Activated T-helper 1 cell treated with anti-CD3 and anti-CD28 coated beads, Interleukin-12 subunit alpha, Interleukin-12 subunit beta, Interleukin-2, Interleukin-4 antibody, amounts not matched to agents 30 ng/mL and 10 ng/mL and 1 ng/mL, durations not matched to agents 14 hours and 24 hours and 36 hours (primary cell): ENCODE measurements at regions of chr1 and their contacts with region 1.

Region 1: DNA sequence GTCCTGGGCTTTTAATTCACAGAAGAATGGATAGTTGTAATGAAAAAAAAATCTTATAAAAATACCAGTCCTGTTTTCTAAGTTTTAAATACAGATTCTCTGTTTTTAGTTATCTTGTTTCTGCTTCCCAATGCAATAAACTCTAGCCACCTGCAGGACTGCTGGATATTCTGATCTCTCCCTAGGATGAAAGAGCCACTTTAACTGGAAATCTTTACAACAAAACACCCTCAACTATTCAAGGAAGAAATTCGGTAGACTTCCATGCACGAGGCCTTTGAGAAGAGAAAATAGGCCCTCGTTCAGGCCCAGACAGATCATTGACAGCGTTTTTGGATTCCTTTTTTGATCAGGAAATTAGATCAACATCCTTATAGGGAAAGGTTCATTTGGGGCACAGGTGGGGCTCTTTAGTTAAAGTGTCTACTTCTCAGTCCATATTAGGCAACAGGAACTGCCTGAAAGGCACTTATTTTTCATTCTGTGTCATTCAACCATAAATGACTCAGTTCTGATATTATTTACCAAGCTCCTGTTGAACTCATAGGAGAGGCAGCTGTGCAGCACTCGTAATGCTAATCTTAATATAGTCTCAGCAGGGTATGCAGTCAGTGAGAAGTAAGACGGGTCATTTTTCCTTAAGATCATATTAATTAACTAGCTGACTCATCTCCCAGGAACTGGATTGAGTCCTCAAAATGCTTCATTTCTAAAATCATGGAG is 71.1 kb upstream of the ERRFI1 start:
- DNase-seq: peak; percentile 11
- H3K4me3 Mint-ChIP-seq: peak overlapping the region; percentile 63
- H3K27ac Mint-ChIP-seq: peak overlapping the region; percentile 69
- H3K4me1 Mint-ChIP-seq: peaks cover 37% of the 10 kb centered on the region
- H3K27me3 Mint-ChIP-seq: peaks cover 5% of the 10 kb centered on the region

Region 2: DNA sequence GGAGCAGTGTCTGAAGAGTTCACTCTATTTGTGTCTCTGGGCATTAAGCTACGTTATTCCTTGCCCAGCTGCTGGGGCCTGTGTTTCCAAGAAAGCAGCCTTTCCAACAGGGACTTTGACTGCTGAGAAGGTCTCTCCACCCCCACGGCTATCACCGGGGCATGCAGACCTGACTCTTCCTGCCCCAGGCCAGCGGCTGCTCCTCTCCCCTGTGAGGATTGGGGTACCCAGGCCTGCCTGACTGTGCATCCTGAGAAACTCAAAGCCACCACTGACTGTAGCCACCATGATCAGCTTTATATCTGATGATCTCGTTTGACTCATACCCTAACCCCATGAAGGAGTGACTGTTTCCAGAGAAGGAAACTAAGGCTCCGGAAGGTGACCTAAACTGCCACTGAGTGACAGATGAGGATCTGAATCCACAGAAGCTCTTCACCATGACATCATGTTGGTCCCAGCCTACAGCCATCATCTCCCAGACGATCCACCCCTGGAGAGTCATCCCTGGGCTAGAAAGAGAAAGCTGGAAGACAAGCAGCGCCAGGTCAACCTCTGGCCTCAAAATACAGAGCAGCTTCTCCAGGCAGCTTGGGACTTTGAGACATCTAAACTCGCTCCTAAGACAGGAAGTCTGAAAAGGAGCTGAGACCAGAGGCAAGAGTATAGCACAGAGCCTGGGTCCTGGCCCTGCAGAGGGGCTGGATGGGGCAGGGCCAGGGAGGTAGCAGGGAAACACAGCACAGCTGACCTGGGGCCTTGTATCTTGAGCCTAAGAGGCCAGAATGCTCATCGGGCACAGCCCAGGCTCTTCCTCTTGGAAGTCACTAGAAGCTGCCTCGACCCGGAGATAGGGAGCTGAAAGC is 570.1 kb before region 1 on chr1:
- intact Hi-C with region 1: no loop called
- DNase-seq: no peak
- H3K4me3 Mint-ChIP-seq: no peak overlapping the region
- H3K27ac Mint-ChIP-seq: no peak overlapping the region
- H3K4me1 Mint-ChIP-seq: no peaks in the 10 kb centered on the region
- H3K27me3 Mint-ChIP-seq: no peaks in the 10 kb centered on the region

Region 3: DNA sequence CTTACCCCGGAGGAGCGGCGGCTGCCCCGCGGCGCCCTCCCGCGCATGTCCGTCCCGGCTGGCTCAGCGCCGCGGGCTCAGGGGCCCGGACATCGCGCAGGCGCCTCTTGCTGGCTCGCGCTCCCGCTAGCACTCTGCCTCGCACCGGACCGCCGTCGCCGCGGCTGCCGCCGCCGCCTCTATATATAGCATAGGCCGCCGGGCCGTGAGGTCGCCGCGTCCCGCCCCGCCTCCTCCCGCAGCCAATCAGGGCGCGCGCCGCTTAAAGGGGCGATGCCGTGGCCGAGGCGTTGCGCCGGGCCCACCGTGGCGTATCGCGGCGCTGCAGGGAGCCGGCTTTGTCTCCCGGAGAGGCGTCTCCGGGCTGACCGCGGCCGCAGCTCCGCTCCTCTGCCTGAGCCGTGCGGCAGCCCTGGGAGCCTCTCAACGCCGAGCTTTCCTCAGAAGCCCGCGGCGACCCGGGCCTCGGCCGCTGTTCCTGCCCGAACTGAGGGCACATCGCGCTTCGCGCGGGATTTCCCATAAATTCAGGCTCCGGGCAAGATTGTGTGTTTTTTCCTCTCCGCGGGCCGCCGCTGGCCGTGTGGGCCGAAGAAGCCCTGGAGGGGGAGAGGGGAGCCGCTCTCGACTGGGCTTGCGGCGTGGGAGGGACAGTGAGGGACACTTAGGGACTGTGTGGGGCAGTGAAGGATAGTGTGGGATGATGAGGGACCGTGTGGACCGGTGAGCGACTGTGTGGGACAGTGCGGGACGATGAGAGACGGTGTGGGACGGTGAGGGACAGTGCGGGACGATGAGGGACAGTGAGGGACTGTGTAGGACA is 70.9 kb before region 1 on chr1 and contains the start of gene ERRFI1:
- intact Hi-C with region 1: loop called (anchors 1 kb)
- DNase-seq: peak; percentile 83
- H3K4me3 Mint-ChIP-seq: peak within 1 kb of the TSS; percentile 84
- H3K27ac Mint-ChIP-seq: peak within 1 kb of the TSS; percentile 32
- H3K4me1 Mint-ChIP-seq: peaks cover 12% of the 10 kb centered on the region
- H3K27me3 Mint-ChIP-seq: peaks cover 52% of the 10 kb centered on the region
- total RNA-seq, gene ERRFI1: 1.6 and 3.2 TPM in 2 replicates

Region 4: DNA sequence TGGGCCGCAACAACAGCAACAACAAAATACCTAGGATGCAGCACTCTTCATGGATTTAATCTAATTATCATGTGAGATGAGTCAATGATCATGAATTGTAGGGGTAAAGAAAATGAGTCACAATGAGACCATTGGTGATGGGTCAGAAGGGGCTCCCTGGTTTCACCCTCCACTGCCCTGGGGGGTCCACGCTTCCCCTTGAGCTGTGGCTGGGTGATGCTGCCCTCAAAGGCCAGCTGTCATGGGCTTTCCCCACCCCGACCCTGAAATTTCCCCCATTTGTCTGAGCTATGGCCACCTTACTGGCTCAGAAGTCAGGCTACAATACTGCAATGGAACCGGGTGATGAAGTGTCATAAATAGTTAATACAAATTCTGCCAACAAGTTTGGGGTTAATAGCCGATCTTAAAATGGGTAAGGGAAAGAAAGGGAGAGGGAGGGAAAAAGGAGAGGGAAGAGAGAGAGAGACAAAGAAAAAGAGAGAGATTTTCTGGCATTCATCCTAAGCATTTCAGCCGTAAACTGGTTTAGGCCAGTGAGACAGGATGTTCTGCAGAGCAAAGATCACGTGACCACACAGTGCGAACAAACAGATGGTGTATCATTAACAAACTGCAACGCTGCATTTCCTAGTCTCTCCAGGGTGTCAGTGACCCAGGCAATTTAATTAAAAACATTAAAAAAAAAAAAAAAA is 72.3 kb after region 1 on chr1:
- intact Hi-C with region 1: loop called (anchors 1 kb)
- DNase-seq: peak; percentile 38
- H3K4me3 Mint-ChIP-seq: peak overlapping the region; percentile 25
- H3K27ac Mint-ChIP-seq: peak overlapping the region; percentile 90
- H3K4me1 Mint-ChIP-seq: peaks cover 25% of the 10 kb centered on the region
- H3K27me3 Mint-ChIP-seq: peaks cover 3% of the 10 kb centered on the region

Region 5: GRCh38 chr1:8314346-8315280 is 217.4 kb after region 1 on chr1:
- intact Hi-C with region 1: loop called (anchors 2 kb)
- DNase-seq: no peak
- H3K4me3 Mint-ChIP-seq: no peak overlapping the region
- H3K27ac Mint-ChIP-seq: no peak overlapping the region
- H3K4me1 Mint-ChIP-seq: peaks cover 18% of the 10 kb centered on the region
- H3K27me3 Mint-ChIP-seq: peaks cover 44% of the 10 kb centered on the region

Region 6: DNA sequence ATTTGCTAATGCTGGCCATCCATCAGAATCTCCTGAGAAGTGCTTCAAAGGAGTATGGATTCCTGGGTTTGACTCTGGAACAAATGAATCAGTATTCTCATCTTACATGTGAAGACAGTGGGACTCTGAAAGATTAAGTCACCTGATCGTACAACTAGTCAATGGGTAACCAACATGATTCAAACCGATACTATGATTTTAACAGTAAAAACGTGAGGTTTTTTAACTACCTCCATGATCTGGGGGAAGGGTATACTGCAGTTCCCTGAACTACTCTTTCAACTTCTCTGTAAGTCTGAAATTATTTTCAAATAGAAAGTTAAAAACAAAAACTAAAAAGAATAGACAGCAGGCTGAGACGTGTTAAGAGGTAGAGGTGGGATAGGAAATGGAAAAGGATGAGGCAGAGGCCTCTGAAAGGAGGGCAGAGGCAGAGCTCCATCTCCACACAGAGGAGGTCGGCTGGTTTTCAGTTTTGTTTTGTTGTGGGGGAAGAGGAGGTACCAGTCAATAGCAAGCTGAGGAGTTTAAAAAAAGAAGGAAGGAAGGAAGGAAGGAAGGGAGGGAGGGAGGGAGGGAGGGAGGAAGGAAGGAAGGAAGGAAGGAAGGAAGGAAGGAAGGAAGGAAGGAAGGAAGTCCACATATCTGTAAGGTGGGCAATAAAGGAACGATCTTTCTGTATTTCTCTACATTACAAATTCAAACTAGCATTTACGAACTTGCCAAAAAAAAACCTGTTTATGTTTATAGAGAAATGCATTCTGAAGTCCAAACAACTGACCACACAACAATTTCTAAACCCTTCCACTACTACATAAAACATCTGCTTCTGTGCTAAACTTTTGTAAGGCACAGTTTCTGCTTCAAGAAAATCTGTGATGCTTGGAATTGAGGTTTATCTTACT is 507.1 kb after region 1 on chr1:
- intact Hi-C with region 1: loop called (anchors 1 kb)
- DNase-seq: peak; percentile 34
- H3K4me3 Mint-ChIP-seq: peak overlapping the region; percentile 61
- H3K27ac Mint-ChIP-seq: peak overlapping the region; percentile 94
- H3K4me1 Mint-ChIP-seq: peaks cover 48% of the 10 kb centered on the region
- H3K27me3 Mint-ChIP-seq: no peaks in the 10 kb centered on the region